Gastrocnemius medialis (tissue), 4 donors: ENCODE measurements at regions of chr3 and their contacts with region 1.

Region 1: DNA sequence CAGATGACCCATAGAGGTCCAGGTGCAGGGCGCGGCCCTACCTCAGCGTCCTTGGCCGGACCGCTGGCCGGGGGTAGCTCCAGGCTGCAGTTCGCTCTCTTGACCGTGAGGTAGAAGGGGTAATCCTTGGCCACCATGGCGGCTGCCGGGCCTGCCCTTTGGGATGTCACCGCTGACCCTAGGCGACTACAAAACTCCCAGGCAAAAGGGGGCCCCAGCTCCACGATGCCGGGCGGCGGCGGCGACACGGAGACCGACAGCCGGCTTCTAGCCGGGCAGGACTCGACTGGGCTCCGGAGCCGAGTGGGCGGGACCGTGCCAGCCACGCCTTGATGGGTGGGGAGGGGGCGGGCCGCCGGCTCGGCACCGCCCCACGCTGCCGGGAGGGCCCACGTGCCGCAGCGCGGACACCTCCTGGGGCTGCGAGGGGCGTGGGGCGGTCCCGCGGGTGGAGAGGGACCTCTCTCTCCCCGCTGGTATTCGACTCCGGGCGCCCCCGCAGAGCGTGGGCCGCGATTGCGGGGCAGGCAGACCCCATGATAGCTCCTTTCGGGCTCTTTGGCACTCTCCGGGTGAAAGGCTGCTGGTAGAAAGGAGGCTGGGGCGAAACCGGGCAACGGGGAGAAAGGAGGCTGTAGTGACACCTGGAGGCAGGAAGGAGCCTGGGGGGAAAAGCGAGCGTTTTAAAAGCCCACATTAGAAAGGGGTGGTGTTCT is at the start of gene ARHGEF3:
- DNase-seq: peak; percentile 79
- ATAC-seq: peak; percentile 86
- H3K4me3 ChIP-seq: peak within 1 kb of the TSS; percentile 84 to 90 (median 86)
- H3K27ac ChIP-seq: peak within 1 kb of the TSS; percentile 85 to 94 (median 88)
- H3K4me1 ChIP-seq: peaks cover 24 to 41% of the 10 kb centered on the region in 2 donors
- H3K27me3 ChIP-seq: no peaks in the 10 kb centered on the region
- CTCF ChIP-seq: peak; percentile 46 to 82 (median 67)
- POLR2A ChIP-seq: peak; percentile 91 to 94
- total RNA-seq, gene ARHGEF3: 3.1 to 11.6 (median 5.7) TPM

Region 2: DNA sequence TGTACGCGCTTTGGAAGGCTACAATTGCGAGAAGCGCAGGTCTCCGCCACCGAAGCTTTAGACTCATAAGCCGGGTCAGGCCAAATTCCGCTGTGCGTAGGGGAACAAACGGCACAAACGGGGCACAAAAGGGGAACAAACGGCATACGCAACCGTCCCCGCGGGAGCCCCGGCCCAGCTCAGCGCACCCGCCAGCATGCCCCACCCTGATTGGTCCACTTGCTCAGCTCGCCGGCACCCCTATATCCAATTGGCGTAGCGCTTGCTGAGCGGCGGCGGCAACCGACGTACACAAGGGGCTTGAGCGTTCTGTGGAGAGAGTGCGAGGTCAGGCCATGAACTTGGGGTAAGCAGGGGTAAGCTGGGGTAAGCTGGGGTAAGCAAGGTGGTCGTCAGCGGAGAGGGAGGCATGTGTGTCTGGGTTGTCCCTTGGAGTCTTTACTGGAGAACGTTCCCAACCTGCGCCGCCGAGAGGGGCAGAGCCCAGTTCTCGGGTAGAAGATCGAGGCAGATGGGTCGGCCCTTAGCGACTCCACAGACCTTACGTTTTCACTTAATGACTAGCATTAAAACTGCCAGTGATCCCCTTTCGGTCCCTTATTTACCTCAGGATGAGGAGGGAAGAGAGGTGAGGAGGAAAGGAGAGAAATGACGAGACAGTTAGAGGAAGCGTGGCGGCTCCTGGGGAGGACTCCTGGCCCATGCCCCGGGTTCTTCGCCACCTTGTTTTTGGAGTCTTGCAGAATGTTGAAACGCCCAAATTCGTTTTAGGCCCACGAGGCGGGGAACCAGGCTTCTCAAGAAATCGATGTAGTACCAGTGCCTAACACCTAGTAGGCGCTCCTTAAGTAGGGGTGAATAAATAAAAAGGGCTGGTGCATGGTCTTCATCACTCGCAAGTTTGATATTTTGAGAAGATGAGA is 244.7 kb before region 1 on chr3 and contains the start of gene CCDC66:
- in situ Hi-C with region 1: no loop called
- intact Hi-C with region 1: loop called (anchors 5 kb)
- DNase-seq: peak; percentile 95
- ATAC-seq: peak; percentile 98 to 99
- H3K4me3 ChIP-seq: peak within 1 kb of the TSS; percentile 60 to 87 (median 83)
- H3K27ac ChIP-seq: peak within 1 kb of the TSS; percentile 82 to 91 (median 89)
- H3K4me1 ChIP-seq: peaks cover 10 to 12% of the 10 kb centered on the region in 2 donors
- H3K27me3 ChIP-seq: no peaks in the 10 kb centered on the region
- CTCF ChIP-seq: peak; percentile 51 to 74 (median 57)
- POLR2A ChIP-seq: peak; percentile 77 to 78
- total RNA-seq, gene CCDC66: 7.9 to 14.5 (median 9.3) TPM

Region 3: DNA sequence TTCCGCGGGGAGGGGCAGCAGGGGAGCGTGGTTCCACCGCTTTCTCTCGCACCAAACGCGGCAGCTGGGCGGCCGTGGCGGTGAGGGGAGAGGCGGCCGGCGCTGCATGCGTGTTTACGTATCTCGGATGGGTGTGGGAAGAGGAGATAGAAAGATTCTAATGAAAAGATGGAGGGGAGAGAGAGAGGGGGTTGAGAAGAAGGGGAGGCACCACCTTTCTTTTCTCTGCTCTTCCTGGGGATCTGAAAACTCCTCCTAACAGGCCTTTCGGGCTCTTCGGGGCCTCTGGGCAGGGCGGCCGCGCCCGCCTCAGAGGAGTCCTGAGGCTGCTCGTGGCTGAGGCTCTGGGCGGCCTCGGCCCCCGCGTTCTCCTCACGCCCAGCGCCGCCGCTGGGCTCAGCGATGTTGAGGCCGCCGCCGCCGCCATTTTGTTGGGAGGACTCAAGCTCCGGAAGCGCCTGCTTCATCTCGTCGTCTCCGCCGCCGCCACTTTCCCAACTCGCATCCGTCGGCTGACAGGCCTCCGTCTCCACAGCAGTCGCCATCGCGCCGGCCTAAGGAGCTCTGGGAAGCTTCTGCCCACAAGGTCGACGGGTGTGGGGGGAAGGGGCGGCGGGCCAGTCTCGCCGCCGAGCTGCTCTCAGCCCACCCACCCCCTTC is 119.2 kb before region 1 on chr3:
- in situ Hi-C with region 1: no loop called
- intact Hi-C with region 1: loop called (anchors 1 kb)
- DNase-seq: peak; percentile 53 to 58
- ATAC-seq: peak; percentile 85
- H3K4me3 ChIP-seq: peak overlapping the region; percentile 86 to 98 (median 94)
- H3K27ac ChIP-seq: peak overlapping the region; percentile 97 to 99 (median 98)
- H3K4me1 ChIP-seq: peaks cover 13 to 14% of the 10 kb centered on the region in 2 donors
- H3K27me3 ChIP-seq: no peaks in the 10 kb centered on the region
- CTCF ChIP-seq: peak in 1 of 5 experiments; percentile 15
- POLR2A ChIP-seq: peak in 1 of 2 donors; percentile 28

Region 4: DNA sequence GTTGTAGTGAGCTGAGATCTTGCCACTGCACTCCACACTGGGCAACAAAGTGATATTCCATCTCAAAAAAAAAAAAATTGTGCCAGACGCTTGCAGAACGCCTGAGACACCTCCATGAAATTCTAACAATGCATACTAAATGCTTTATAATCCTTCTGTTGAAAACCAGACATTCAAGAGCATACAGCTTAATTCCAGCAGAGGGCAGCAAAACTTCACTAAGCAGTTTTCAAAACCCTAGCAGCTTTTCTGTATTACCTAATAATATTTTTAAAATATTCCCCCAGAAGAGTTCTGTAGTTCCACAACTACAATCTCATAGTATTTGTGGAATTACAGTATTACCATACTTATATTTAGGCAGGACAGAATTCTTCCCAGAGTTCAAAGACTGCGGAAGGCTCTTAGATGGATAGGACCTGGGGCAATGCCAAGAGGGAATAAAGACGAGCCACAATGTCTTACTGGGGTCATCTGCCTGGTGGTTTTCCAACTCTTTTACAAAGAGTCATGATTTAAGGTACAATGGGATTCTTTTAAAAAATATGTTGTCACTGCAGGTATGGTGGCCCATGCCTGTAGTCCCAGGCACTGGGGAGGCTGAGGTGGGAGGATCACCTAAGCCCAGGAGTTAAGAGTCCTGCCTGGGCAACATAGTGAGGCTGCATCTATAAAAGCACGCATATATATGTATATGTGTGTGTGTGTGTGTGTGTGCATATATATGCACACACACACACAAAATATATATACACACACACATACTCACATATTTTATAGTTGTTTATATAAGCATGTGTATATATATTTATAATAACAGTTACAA is 99.1 kb before region 1 on chr3:
- in situ Hi-C with region 1: loop called (anchors 5 kb)
- intact Hi-C with region 1: loop called (anchors 1 kb)
- DNase-seq: peak; percentile 18 to 32
- ATAC-seq: peak; percentile 90 to 92
- H3K4me3 ChIP-seq: no peak overlapping the region
- H3K27ac ChIP-seq: no peak overlapping the region
- H3K4me1 ChIP-seq: no peaks in the 10 kb centered on the region
- H3K27me3 ChIP-seq: no peaks in the 10 kb centered on the region
- CTCF ChIP-seq: peak; percentile 80 to 93 (median 87)
- POLR2A ChIP-seq: no peak

Region 5: DNA sequence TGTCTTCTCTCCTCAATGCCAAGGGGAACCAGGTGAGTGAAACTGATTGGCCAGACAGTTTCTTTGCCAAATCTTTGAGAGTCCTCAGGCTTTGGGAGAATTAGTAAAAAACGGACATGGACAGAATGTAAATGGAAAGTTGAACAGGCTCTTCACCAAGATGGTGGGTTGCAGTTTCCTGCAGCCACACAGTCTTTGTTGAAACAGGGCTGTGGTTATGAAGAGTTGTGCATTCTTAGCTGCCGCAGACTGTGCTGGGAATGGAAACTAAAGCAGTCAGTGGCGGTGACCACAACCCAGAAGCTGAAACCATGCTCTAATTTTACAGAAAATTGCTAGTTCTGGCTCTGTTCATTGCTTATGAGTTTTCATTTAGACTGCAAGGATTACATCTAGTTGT is 76.6 kb before region 1 on chr3:
- in situ Hi-C with region 1: no loop called
- intact Hi-C with region 1: no loop called
- DNase-seq: no peak
- ATAC-seq: no peak
- H3K4me3 ChIP-seq: no peak overlapping the region
- H3K27ac ChIP-seq: no peak overlapping the region
- H3K4me1 ChIP-seq: no peaks in the 10 kb centered on the region
- H3K27me3 ChIP-seq: no peaks in the 10 kb centered on the region
- CTCF ChIP-seq: no peak
- POLR2A ChIP-seq: no peak

Region 6: GRCh38 chr3:56758539-56758981 is 43.3 kb before region 1 on chr3:
- in situ Hi-C with region 1: loop called in 1 of 4 experiments (anchors 5 kb)
- intact Hi-C with region 1: loop called (anchors 1 kb)
- DNase-seq: peak in 1 of 2 donors; percentile 27
- ATAC-seq: peak; percentile 69 to 77
- H3K4me3 ChIP-seq: no peak overlapping the region
- H3K27ac ChIP-seq: peak overlapping the region; percentile 21 to 53 (median 39)
- H3K4me1 ChIP-seq: peaks cover 42% of the 10 kb centered on the region in 2 donors
- H3K27me3 ChIP-seq: no peaks in the 10 kb centered on the region
- CTCF ChIP-seq: no peak
- POLR2A ChIP-seq: no peak

Region 7: GRCh38 chr3:56988458-56989168 is 186.8 kb after region 1 on chr3:
- in situ Hi-C with region 1: loop called in 3 of 4 experiments (anchors 10 to 25 kb)
- intact Hi-C with region 1: loop called (anchors 1 kb)
- DNase-seq: peak; percentile 54 to 68
- ATAC-seq: peak; percentile 89 to 90
- H3K4me3 ChIP-seq: no peak overlapping the region
- H3K27ac ChIP-seq: no peak overlapping the region
- H3K4me1 ChIP-seq: no peaks in the 10 kb centered on the region
- H3K27me3 ChIP-seq: no peaks in the 10 kb centered on the region
- CTCF ChIP-seq: peak; percentile 62 to 86 (median 77)
- POLR2A ChIP-seq: no peak

Region 8: GRCh38 chr3:56997675-56998074 is 195.9 kb after region 1 on chr3:
- in situ Hi-C with region 1: loop called in 2 of 4 experiments (anchors 10 to 25 kb)
- intact Hi-C with region 1: no loop called
- DNase-seq: no peak
- ATAC-seq: no peak
- H3K4me3 ChIP-seq: no peak overlapping the region
- H3K27ac ChIP-seq: no peak overlapping the region
- H3K4me1 ChIP-seq: no peaks in the 10 kb centered on the region
- H3K27me3 ChIP-seq: no peaks in the 10 kb centered on the region
- CTCF ChIP-seq: no peak
- POLR2A ChIP-seq: no peak

Region 9: DNA sequence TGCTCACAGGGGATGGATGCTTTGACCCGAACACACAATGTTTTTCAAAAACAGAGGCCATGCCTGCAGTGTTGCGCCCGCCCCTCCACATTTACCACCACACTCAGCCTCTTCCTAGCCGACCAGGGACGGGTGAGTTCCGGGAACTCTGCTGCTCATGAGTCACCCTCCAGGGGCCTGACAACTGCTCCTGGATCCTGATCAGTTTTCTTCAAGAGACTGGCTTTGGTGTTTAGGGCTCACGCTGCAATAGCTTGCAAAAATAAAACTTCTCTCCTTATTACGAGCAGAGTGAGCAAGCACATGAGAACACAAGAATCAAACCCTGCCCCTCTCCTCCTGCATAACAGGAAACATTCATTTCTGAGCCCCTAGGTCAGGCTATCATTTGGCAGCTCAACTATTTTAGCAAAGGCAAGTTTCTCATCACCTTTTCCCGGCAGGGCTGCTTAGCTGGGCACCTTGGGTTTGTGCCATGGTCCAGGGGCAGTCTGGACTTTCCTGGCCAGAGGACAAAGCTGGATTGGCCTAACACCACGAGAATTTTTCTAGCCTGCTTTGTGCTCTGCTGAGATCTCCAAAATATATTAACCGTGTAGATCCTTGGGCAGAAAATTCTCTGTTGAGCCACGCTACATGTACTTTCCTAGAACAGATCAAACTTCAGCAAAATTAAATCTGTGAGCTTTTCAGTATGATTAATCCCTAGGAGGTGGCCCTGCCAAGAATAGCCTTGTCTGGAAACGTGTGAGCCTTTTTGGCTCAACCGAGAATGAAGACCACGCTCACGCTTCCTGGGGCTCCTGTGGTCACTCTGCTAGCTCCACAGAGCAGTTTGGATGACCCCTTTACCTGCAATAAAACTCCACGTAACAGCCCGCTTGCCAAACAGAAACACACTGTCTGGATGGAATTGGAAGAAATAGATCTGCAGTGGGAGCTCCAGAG is 206.0 kb after region 1 on chr3:
- in situ Hi-C with region 1: no loop called
- intact Hi-C with region 1: no loop called
- DNase-seq: peak; percentile 54 to 65
- ATAC-seq: peak; percentile 83 to 86
- H3K4me3 ChIP-seq: no peak overlapping the region
- H3K27ac ChIP-seq: peak overlapping the region; percentile 60 to 69 (median 65)
- H3K4me1 ChIP-seq: peaks cover 28 to 32% of the 10 kb centered on the region in 2 donors
- H3K27me3 ChIP-seq: no peaks in the 10 kb centered on the region
- CTCF ChIP-seq: no peak
- POLR2A ChIP-seq: no peak